ENCODE measurements at regions of chr17 and their contacts with region 1.

Region 1: DNA sequence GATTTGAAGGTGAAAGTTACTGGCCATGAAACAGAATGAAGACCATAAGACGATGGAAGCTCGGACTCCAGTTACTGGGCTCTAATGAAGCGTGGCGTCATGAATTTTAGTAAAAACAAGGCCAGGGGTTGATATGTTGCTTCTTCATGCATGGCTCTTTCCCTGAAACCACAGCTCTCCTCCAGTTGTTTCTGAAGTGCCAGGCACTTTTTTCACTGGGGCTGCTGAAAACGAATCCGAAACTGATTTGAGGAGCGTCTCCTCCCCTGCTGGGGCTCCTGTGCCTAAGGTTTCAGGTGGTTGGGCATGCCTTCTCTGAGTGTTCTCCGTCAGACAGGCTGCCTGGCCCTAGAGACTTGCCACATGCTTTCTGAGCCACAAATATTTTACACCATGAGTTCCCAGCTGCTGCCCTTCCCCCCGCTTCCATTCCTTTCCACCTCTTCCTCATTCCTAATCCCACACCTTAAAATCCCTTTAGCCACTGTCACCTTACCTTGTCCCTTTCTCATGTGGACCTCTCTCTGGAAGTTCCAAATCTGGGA is 3.7 kb upstream of the MYL4 start:
- DNase-seq: peak; percentile 84
- H3K4me3 Mint-ChIP-seq: peak overlapping the region; percentile 46
- H3K27ac Mint-ChIP-seq: peak overlapping the region; percentile 96
- H3K4me1 Mint-ChIP-seq: peaks cover 52% of the 10 kb centered on the region
- H3K27me3 Mint-ChIP-seq: peaks cover 10% of the 10 kb centered on the region

Region 2: GRCh38 chr17:47220531-47220999 is 15.1 kb after region 1 on chr17:
- CTCF ChIA-PET with region 1: interaction called, 10 read pairs
- DNase-seq: peak; percentile 35
- H3K4me3 Mint-ChIP-seq: no peak overlapping the region
- H3K27ac Mint-ChIP-seq: peak overlapping the region; percentile 5
- H3K4me1 Mint-ChIP-seq: peaks cover 50% of the 10 kb centered on the region
- H3K27me3 Mint-ChIP-seq: peaks cover 33% of the 10 kb centered on the region

Measured in activated naive CD4-positive, alpha-beta T cell treated with anti-CD3 and anti-CD28 coated beads, Interleukin-2, amount 10 ng/mL, durations not matched to agents 7 days and 5 days (primary cell).